Mucosa of descending colon (tissue), 3 donors: ENCODE measurements at regions of chr6 and their contacts with region 1.

Region 1: GRCh38 chr6:105992315-105992961 is 93.7 kb upstream of the PRDM1 start:
- DNase-seq: peak; percentile 92 to 93 (median 92)
- ATAC-seq: peak; percentile 96
- H3K4me3 ChIP-seq: peak overlapping the region; percentile 28
- H3K4me1 ChIP-seq: peaks cover 5% of the 10 kb centered on the region
- CTCF ChIP-seq: no peak

Region 2: DNA sequence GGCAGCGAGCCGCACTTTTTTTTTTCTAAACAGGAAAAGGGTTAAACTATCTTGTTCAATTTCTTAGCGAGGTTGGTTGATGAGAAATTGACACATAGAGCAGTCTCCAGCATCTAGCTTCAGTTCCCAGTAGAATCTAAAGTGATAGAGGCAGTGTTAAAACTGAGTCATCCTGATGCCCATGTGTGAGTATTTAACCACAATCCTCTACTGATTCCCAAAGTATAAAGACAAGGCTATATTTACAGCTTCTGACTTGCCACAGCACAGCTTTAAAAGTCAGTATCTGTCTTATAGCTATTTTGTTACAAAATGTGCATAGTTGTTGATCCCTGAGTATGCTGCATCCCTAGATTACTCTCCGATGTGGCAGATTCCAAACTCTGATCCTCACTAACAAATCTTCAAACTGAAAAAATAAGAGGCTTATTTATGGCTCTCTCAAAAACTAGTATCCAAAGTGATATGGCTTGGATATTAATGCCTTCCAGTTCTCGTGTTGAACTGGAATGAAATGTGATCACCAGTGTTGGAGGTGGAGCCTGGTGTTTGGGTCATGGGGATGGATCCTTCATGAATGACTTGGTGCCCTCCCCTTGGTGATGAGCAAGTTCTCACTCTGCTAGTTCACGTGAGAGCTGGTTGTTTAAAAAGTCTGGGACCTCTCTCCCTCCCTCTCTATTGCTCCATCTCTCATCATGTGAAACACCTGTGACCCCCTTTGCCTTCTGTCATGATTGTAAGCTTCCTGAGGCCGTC is 799.6 kb before region 1 on chr6:
- intact Hi-C with region 1: no loop called
- DNase-seq: no peak
- ATAC-seq: no peak
- H3K4me3 ChIP-seq: no peak overlapping the region
- H3K4me1 ChIP-seq: no peaks in the 10 kb centered on the region
- CTCF ChIP-seq: no peak

Region 3: DNA sequence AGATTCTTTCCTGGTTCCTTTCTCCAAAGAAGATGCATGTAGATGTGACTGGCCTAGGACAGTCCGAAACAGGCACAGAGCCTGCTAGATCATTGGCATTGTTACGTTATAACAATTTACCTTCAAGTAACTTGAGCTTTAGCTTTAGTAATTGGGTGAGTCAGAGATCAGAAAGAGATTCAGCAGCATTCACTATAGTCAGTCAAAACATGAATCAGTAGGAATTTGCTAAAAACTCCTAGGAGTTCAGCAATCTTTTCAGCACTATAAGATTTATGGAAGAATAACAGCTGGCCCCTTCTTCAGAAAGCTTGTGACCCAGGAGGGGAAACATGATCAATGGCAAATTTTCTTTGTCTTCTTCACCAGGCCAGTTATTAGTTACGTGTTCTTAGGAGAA is 188.0 kb before region 1 on chr6:
- intact Hi-C with region 1: loop called in 1 of 2 experiments (anchors 10 kb)
- DNase-seq: no peak
- ATAC-seq: no peak
- H3K4me3 ChIP-seq: no peak overlapping the region
- H3K4me1 ChIP-seq: no peaks in the 10 kb centered on the region
- CTCF ChIP-seq: no peak

Region 4: DNA sequence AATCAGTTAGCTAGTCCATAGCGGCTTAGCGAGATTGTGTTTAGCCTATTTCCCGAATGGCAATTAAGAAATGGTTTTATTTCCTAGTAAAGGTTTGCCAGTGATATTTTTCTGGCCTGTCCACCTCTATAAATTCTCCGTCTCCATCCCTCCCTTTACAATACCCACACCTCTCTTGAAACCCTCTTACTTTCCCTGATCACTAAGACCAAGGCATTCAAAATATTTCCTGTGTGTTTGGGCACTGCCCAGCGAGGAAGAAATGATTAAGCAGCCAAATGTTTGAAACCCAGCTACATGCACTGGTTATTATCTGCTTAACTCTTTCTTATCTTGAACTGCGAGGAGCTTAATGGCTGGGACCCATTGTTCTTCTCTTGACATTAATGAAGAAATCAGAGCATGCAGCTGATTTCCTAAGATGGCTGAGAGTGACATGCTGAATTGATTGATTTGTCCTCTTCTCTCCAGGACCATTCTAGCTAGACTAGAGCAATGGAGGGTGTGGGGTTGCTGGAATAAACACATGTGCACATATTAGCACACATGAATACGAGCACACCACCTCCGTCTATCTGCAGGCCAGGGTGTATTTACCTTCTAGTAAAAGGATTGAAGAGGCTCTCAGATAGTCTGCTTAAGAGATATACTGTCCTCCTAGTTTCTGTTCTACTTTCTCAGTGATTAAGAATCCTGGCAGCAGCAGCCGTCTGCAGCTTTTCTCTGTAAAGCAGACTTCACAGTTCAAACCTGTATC is 47.6 kb after region 1 on chr6:
- intact Hi-C with region 1: no loop called
- DNase-seq: no peak
- ATAC-seq: no peak
- H3K4me3 ChIP-seq: no peak overlapping the region
- H3K4me1 ChIP-seq: no peaks in the 10 kb centered on the region
- CTCF ChIP-seq: no peak